Natural killer cell (primary cell): ENCODE measurements at regions of chr15 and their contacts with region 1.

Region 1: DNA sequence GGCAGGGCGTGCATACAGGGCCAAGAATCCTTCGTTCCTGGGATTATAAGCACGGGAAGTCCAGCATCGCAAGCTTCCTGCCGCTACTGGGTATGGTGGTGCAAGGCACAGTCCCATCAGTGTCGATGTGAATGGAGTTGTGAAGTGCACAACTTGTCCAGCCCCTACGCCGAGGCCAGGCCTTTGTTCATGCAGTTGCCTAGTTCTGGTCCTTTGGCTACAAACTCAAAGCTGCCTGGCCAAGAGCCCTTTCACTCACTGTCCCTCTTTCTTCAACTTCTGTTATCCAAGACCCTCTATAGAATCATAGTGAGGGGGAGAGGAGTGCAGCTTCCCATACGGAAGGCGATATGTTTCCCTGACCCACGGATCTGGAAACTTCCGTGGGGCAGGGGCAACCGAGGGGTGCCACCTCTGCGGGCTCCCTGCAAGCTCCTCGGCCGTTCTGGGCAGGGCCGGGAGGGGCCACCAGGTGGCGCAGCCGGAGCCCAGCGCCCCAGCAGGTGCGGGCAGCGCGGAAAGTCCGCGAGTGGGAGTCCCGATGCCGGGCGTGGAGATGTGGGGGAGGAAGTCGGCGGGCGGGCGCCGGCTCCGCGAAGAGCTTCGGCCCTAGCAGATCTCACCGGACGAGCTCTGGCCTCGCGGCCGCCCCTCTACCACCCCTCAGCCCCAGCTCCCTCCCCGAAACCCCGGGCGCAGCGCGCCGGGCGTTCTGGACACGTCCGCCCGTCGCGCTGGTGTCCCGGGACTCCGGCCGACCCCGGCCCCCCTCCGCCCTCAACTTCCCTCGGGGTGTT is 693 bp downstream of the RASGRP1 start:
- DNase-seq: peak; percentile 91 to 93
- ATAC-seq: peak; percentile 79 to 90 (median 81)
- H3K4me3 ChIP-seq: peak overlapping the region; percentile 49
- H3K4me3 Mint-ChIP-seq: peak overlapping the region; percentile 94
- H3K27ac ChIP-seq: peak overlapping the region; percentile 88
- H3K27ac Mint-ChIP-seq: peak overlapping the region; percentile 81 to 94
- H3K4me1 ChIP-seq: peaks cover 43% of the 10 kb centered on the region
- H3K4me1 Mint-ChIP-seq: peaks cover 71 to 72% of the 10 kb centered on the region in 2 donors
- H3K27me3 ChIP-seq: no peaks in the 10 kb centered on the region
- H3K27me3 Mint-ChIP-seq: no peaks in the 10 kb centered on the region
- CTCF ChIP-seq: peak; percentile 96

Region 2: DNA sequence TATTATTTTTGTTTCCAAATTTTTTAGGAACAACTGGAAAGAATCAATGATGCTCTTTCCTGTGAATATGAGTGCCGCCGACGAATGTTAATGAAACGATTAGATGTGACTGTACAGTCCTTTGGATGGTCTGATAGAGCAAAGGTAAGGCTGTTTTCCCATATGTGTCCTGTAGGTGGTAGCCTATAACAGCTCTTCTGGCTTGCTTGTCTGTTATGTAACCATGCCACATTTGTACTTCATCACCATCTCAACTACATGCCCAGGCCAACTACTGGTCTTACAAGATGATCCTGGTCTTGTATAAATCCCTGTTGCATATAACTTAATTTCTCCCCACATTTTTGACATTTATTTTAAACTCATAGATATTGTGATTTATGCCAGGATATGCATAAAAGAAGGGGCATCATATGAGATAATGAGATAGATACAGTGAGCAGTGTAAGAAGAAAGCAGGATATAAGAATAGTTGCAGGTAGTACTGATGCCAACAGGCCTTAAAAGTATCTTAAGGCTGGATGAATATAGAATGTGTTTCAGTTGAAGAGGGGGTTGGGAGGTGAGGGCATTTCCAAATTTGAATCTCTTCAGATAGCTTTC is 89.7 kb before region 1 on chr15:
- intact Hi-C with region 1: loop called (anchors 10 kb)
- DNase-seq: peak in 1 of 2 donors; percentile 85
- ATAC-seq: peak; percentile 93 to 100 (median 99)
- H3K4me3 ChIP-seq: no peak overlapping the region
- H3K4me3 Mint-ChIP-seq: peak overlapping the region; percentile 14
- H3K27ac ChIP-seq: no peak overlapping the region
- H3K27ac Mint-ChIP-seq: peak overlapping the region; percentile 64 to 71
- H3K4me1 ChIP-seq: no peaks in the 10 kb centered on the region
- H3K4me1 Mint-ChIP-seq: peaks cover 5 to 7% of the 10 kb centered on the region in 2 donors
- H3K27me3 ChIP-seq: no peaks in the 10 kb centered on the region
- H3K27me3 Mint-ChIP-seq: no peaks in the 10 kb centered on the region
- CTCF ChIP-seq: peak; percentile 83

Region 3: GRCh38 chr15:38576837-38577236 is 12.9 kb after region 1 on chr15:
- intact Hi-C with region 1: loop called (anchors 1 kb)
- DNase-seq: peak in 1 of 2 donors; percentile 67
- ATAC-seq: peak; percentile 87 to 96 (median 92)
- H3K4me3 ChIP-seq: no peak overlapping the region
- H3K4me3 Mint-ChIP-seq: peak overlapping the region; percentile 78
- H3K27ac ChIP-seq: peak overlapping the region; percentile 77
- H3K27ac Mint-ChIP-seq: peak overlapping the region; percentile 83 to 88
- H3K4me1 ChIP-seq: peaks cover 29% of the 10 kb centered on the region
- H3K4me1 Mint-ChIP-seq: peaks cover 45 to 55% of the 10 kb centered on the region in 2 donors
- H3K27me3 ChIP-seq: no peaks in the 10 kb centered on the region
- H3K27me3 Mint-ChIP-seq: peaks cover 0 to 3% of the 10 kb centered on the region in 2 donors
- CTCF ChIP-seq: no peak

Region 4: GRCh38 chr15:38652998-38653397 is 89.1 kb after region 1 on chr15:
- intact Hi-C with region 1: loop called (anchors 1 kb)
- DNase-seq: peak; percentile 70 to 95
- ATAC-seq: peak; percentile 77 to 89 (median 84)
- H3K4me3 ChIP-seq: no peak overlapping the region
- H3K4me3 Mint-ChIP-seq: peak overlapping the region; percentile 89
- H3K27ac ChIP-seq: peak overlapping the region; percentile 75
- H3K27ac Mint-ChIP-seq: peak overlapping the region; percentile 95 to 96
- H3K4me1 ChIP-seq: peaks cover 45% of the 10 kb centered on the region
- H3K4me1 Mint-ChIP-seq: peaks cover 65 to 66% of the 10 kb centered on the region in 2 donors
- H3K27me3 ChIP-seq: no peaks in the 10 kb centered on the region
- H3K27me3 Mint-ChIP-seq: no peaks in the 10 kb centered on the region
- CTCF ChIP-seq: peak; percentile 27